ENCODE measurements at regions of chr10 and their contacts with region 1.

Region 1: GRCh38 chr10:100046021-100046486 is 35.6 kb downstream of the CPN1 start:
- DNase-seq: peak; percentile 51 to 73
- ATAC-seq: peak; percentile 71 to 86
- H3K4me3 ChIP-seq: no peak overlapping the region
- H3K27ac ChIP-seq: peak overlapping the region in 2 of 4 donors; percentile 21 to 68
- H3K4me1 ChIP-seq: peaks cover 4 to 12% of the 10 kb centered on the region in 2 donors
- H3K27me3 ChIP-seq: no peaks in the 10 kb centered on the region
- CTCF ChIP-seq: peak; percentile 88 to 96 (median 92)
- POLR2A ChIP-seq: no peak

Region 2: GRCh38 chr10:99845837-99846382 is 200.1 kb before region 1 on chr10:
- in situ Hi-C with region 1: loop called (anchors 5 kb)
- intact Hi-C with region 1: loop called (anchors 1 kb)
- DNase-seq: peak; percentile 52 to 75
- ATAC-seq: peak; percentile 97 to 99
- H3K4me3 ChIP-seq: peak overlapping the region; percentile 28 to 41 (median 32)
- H3K27ac ChIP-seq: peak overlapping the region in 1 of 4 donors; percentile 7
- H3K4me1 ChIP-seq: peaks cover 0 to 6% of the 10 kb centered on the region in 2 donors
- H3K27me3 ChIP-seq: no peaks in the 10 kb centered on the region
- CTCF ChIP-seq: peak; percentile 88 to 93 (median 91)
- POLR2A ChIP-seq: no peak

Region 3: GRCh38 chr10:99906470-99906869 is 139.6 kb before region 1 on chr10:
- in situ Hi-C with region 1: no loop called
- intact Hi-C with region 1: loop called (anchors 1 kb)
- DNase-seq: peak; percentile 80 to 93
- ATAC-seq: peak; percentile 98 to 100
- H3K4me3 ChIP-seq: no peak overlapping the region
- H3K27ac ChIP-seq: peak overlapping the region; percentile 47 to 69 (median 55)
- H3K4me1 ChIP-seq: peaks cover 4 to 5% of the 10 kb centered on the region in 2 donors
- H3K27me3 ChIP-seq: no peaks in the 10 kb centered on the region
- CTCF ChIP-seq: peak in 1 of 5 experiments; percentile 20
- POLR2A ChIP-seq: no peak

Region 4: DNA sequence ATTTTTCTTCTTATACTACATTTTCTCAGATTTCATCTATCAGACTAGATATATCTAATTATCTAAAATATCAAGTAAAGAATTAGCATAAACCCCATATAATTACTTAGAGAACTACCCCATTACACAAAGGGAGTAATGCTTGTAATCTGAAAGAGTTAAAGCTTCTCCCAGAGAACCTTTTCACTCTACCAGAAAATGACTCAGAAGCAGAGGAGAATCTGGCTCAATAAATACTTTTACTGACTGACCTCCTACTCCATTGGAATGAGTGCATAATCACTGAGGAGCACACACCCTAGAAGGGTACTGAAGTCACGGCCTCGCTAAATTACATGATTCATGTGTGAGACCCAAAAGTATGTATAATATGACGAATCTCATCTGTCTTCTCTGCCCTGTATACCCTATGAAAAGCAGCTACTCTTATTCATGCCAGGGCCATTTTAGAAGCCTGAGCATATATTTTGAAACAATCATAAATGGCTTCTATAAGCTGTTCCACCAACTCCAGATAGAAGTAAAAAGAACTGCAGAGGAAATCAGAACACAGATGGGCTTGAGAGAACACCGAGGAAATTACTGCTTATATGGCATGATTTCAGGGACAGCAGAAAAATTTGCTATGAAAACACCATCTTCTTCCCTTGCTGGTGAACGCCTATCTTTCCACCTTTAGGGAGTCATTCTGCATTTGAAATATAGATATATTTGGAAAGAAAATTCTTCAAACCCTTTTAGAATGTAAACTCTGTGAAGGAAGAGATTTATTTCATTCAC is 69.0 kb before region 1 on chr10:
- in situ Hi-C with region 1: no loop called
- intact Hi-C with region 1: loop called (anchors 5 kb)
- DNase-seq: no peak
- ATAC-seq: peak; percentile 56 to 73
- H3K4me3 ChIP-seq: peak overlapping the region in 1 of 4 donors; percentile 7
- H3K27ac ChIP-seq: peak overlapping the region; percentile 41 to 71 (median 60)
- H3K4me1 ChIP-seq: peaks cover 42 to 49% of the 10 kb centered on the region in 2 donors
- H3K27me3 ChIP-seq: no peaks in the 10 kb centered on the region
- CTCF ChIP-seq: no peak
- POLR2A ChIP-seq: no peak

Region 5: GRCh38 chr10:99993701-99994689 is 52.1 kb before region 1 on chr10:
- in situ Hi-C with region 1: no loop called
- intact Hi-C with region 1: no loop called
- DNase-seq: peak; percentile 44 to 58
- ATAC-seq: peak; percentile 6 to 17
- H3K4me3 ChIP-seq: no peak overlapping the region
- H3K27ac ChIP-seq: peak overlapping the region; percentile 3 to 54 (median 24)
- H3K4me1 ChIP-seq: peaks cover 44 to 52% of the 10 kb centered on the region in 2 donors
- H3K27me3 ChIP-seq: no peaks in the 10 kb centered on the region
- CTCF ChIP-seq: no peak
- POLR2A ChIP-seq: no peak

Measured in gastrocnemius medialis (tissue), 4 donors.